ENCODE measurements at regions of chr11 and their contacts with region 1.

Region 1: GRCh38 chr11:129279326-129280026 is 87.4 kb upstream of the ARHGAP32 start:
- DNase-seq: peak; percentile 14 to 83
- H3K4me3 ChIP-seq: peak overlapping the region; percentile 67 to 78
- H3K27ac ChIP-seq: peak overlapping the region in 1 of 2 donors; percentile 8
- H3K4me1 ChIP-seq: peaks cover 0 to 4% of the 10 kb centered on the region in 2 donors
- H3K27me3 ChIP-seq: no peaks in the 10 kb centered on the region
- CTCF ChIP-seq: no peak

Region 2: DNA sequence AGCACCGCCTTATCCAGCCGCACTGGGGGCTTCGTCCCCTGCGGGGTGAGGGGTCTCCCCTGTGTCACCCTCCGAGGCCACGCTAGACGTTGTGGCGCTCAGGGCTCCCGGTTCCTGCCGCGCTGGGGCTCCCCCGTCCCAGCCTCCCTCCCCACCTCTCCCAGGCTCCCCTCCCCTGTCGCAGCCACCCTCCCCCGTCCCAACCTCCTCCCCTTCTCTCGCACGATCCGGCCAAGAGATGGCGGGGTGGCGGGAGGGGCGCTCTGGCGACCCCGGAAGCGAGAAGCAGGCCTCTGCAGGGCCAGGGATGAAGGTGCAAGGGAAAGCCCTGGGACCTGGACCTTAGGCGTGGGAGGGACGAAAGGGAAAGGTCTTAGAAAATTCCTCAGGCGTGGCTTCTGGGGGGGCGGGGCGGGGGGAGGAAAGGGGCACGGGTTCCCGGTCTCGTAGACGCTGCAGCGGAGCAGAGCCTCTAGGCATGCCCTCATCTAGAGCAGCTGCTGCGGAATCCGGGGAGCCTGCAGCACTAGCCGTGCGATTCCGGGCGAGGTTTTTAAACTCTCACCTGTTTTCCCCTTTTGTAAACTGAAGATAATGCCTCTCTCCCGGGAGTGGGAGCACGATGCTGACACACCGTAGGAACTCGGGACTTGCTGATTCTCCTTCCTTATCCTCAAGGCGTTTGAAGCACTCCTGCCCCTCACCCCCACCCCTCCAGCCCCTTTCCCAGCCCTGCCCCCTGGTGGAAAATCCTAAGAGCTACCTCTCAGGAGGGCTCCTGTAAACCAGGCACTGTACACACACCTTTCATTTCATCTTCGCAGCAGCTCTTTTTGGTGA is 373.9 kb before region 1 on chr11:
- intact Hi-C with region 1: loop called (anchors 10 kb)
- DNase-seq: no peak
- H3K4me3 ChIP-seq: peak overlapping the region; percentile 74 to 83
- H3K27ac ChIP-seq: peak overlapping the region; percentile 63 to 72
- H3K4me1 ChIP-seq: peaks cover 0 to 22% of the 10 kb centered on the region in 2 donors
- H3K27me3 ChIP-seq: no peaks in the 10 kb centered on the region
- CTCF ChIP-seq: peak in 2 of 3 experiments; percentile 34 to 48

Region 3: DNA sequence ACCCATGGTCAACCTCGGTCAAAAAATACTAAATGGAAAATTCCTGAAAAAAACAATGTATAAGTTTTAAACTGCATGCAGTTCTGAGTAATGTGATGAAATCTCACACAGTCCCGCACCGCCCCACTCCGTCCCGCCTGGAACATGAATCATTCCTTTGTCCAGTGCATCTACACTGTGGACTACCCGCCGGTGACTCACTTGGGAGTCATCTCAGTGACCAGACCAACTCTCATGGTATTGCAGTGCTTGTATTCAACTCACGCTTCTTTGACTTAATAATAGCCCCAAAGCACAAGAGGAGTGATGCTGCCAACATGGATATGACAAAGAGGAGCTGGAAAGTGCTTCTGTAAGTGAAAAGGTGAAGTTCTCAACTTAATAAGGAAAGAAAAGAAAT is 136.1 kb before region 1 on chr11:
- intact Hi-C with region 1: loop called (anchors 5 kb)
- DNase-seq: peak; percentile 71 to 94
- H3K4me3 ChIP-seq: no peak overlapping the region
- H3K27ac ChIP-seq: no peak overlapping the region
- H3K4me1 ChIP-seq: peaks cover 0 to 2% of the 10 kb centered on the region in 2 donors
- H3K27me3 ChIP-seq: no peaks in the 10 kb centered on the region
- CTCF ChIP-seq: no peak

Region 4: DNA sequence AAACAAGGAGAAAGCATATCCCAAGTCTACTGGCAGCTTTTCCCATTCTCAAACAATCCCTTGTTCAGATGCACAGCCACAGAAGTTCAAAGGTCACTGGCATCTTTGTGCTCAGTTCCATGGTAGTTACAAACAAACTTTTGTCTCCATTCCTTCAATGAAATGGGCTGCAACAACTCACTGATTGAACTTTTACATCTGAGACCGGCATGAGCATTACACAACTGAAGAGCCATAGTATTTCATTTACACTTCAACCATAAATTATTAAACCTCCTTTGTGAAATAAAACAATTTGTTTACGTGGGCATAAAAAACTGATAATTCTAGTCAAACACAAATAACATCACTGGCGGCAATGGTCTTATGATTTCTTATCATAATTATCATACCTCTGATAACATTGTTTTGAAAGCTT is 19.5 kb before region 1 on chr11:
- intact Hi-C with region 1: loop called (anchors 2 kb)
- DNase-seq: no peak
- H3K4me3 ChIP-seq: no peak overlapping the region
- H3K27ac ChIP-seq: no peak overlapping the region
- H3K4me1 ChIP-seq: peaks cover 0 to 9% of the 10 kb centered on the region in 2 donors
- H3K27me3 ChIP-seq: no peaks in the 10 kb centered on the region
- CTCF ChIP-seq: no peak

Region 5: DNA sequence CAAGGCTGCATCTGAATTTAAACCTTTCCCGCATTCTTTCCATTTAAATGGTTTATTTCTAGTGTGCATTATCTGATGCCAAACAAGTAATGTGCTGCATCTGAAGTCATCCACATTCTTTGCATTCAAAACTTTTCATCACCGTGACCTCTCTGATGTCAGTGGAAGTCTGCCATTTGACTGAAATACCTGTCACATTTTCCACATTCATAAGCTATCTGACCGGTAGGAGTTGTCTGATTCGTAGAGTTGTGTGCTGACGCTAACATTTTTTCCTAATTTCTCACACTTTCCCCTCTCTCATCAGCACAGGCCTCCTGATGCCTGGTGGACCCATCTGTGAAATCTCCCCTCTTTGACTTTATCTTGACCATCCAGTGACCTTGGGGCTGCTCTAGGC is 16.3 kb after region 1 on chr11:
- intact Hi-C with region 1: no loop called
- DNase-seq: no peak
- H3K4me3 ChIP-seq: no peak overlapping the region
- H3K27ac ChIP-seq: no peak overlapping the region
- H3K4me1 ChIP-seq: no peaks in the 10 kb centered on the region
- H3K27me3 ChIP-seq: no peaks in the 10 kb centered on the region
- CTCF ChIP-seq: no peak

Region 6: GRCh38 chr11:129331871-129332274 is 52.4 kb after region 1 on chr11:
- intact Hi-C with region 1: loop called (anchors 5 kb)
- DNase-seq: peak in 1 of 2 donors; percentile 86
- H3K4me3 ChIP-seq: no peak overlapping the region
- H3K27ac ChIP-seq: no peak overlapping the region
- H3K4me1 ChIP-seq: no peaks in the 10 kb centered on the region
- H3K27me3 ChIP-seq: no peaks in the 10 kb centered on the region
- CTCF ChIP-seq: peak; percentile 73 to 87 (median 87)